ENCODE measurements at regions of chr15 and their contacts with region 1.

Region 1: GRCh38 chr15:101014921-101015841 is 96.0 kb downstream of the LRRK1 start:
- DNase-seq: peak; percentile 82
- ATAC-seq: peak; percentile 79

Region 2: GRCh38 chr15:101088788-101089583 is 73.8 kb after region 1 on chr15:
- intact Hi-C with region 1: loop called (anchors 5 kb)
- DNase-seq: peak; percentile 86
- ATAC-seq: peak; percentile 94

Region 3: GRCh38 chr15:101242160-101242998 is 227.2 kb after region 1 on chr15:
- intact Hi-C with region 1: no loop called
- DNase-seq: no peak
- ATAC-seq: peak; percentile 40

Measured in Right ventricle myocardium superior (tissue), 1 donor.